Activated CD4-positive, alpha-beta memory T cell treated with anti-CD3 and anti-CD28 coated beads for 36 hours (primary cell): ENCODE measurements at regions of chr3 and their contacts with region 1.

Region 1: DNA sequence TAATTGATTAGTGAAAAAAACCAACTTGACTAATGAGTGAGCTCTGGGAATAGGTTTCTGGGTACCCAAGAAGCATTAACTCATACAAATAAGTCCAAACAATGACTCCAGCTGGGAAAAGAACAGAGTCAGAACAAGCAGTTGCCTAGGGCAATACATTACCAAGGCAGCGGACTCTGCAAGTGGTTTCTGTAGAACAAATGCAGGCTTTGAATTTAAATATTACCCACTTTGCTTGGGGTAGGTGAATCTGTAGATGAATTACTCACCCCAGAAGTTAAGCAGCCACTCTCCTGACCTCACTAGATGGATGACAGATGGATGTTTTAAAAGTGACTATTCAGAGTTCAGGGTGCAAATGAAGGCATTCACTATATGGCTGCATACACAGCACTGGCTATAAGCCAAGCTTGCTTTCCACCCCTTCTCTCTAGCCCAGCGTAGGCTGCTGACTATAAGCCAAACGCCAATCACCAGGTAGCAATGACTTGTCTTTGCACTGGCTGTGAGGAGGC is 73.1 kb upstream of the BHLHE40 start:
- DNase-seq: peak; percentile 72
- H3K4me3 Mint-ChIP-seq: no peak overlapping the region
- H3K27ac Mint-ChIP-seq: peak overlapping the region; percentile 72
- H3K4me1 Mint-ChIP-seq: peaks cover 70% of the 10 kb centered on the region
- H3K27me3 Mint-ChIP-seq: no peaks in the 10 kb centered on the region

Region 2: GRCh38 chr3:4722103-4722502 is 184.1 kb before region 1 on chr3:
- CTCF ChIA-PET with region 1: interaction called, 4 read pairs
- POLR2A ChIA-PET with region 1: no interaction called
- intact Hi-C with region 1: loop called (anchors 5 kb)
- DNase-seq: peak; percentile 41
- H3K4me3 Mint-ChIP-seq: no peak overlapping the region
- H3K27ac Mint-ChIP-seq: no peak overlapping the region
- H3K4me1 Mint-ChIP-seq: peaks cover 19% of the 10 kb centered on the region
- H3K27me3 Mint-ChIP-seq: no peaks in the 10 kb centered on the region

Region 3: DNA sequence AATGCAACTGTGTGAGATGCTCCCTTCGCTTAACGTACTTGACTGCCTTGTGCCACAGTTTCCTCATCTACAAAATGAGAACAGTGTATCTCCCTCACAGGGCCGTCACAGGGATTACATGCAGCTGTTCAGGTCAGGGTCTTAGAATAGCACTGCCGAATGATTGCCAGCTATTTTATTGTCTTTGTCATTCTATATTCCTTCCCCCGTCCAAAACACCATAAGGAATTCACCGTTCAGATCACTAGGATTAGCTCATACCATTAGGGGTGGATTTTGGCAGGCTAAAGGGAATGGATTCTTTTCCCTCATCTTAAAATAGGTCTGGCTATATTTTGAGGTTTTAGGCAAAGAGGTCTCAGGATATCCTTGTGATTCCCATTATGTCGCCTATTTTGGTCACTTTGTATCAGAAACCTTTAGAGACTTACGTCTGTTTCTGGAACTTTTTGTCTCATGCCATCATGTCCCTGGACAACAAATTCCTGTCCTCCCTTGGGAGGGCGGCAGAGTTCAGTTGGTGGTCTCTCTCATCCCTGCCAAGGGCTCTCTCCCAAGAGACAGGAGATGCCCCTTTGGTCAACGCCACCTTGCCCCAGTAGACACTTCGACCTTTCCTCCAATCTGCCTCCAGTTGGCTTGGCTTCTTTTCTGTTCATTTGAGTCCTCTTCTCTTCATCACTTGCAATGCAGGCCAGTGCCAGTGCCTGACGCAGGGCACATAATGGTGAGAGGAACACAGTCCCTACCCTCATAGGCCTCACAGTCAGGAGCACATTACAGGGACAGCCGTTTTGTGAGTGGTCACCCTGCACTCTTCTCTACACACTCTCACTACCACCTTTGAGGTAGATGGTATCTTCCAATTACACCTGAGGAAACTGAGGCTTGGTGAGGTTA is 98.5 kb before region 1 on chr3:
- CTCF ChIA-PET with region 1: no interaction called
- POLR2A ChIA-PET with region 1: no interaction called
- intact Hi-C with region 1: loop called (anchors 1 kb)
- DNase-seq: no peak
- H3K4me3 Mint-ChIP-seq: peak overlapping the region; percentile 45
- H3K27ac Mint-ChIP-seq: peak overlapping the region; percentile 4
- H3K4me1 Mint-ChIP-seq: peaks cover 42% of the 10 kb centered on the region
- H3K27me3 Mint-ChIP-seq: no peaks in the 10 kb centered on the region

Region 4: GRCh38 chr3:4845882-4846281 is 60.3 kb before region 1 on chr3:
- CTCF ChIA-PET with region 1: interaction called, 3 read pairs
- POLR2A ChIA-PET with region 1: interaction called, 9 read pairs
- intact Hi-C with region 1: loop called (anchors 1 kb)
- DNase-seq: no peak
- H3K4me3 Mint-ChIP-seq: peak overlapping the region; percentile 14
- H3K27ac Mint-ChIP-seq: peak overlapping the region; percentile 83
- H3K4me1 Mint-ChIP-seq: peaks cover 96% of the 10 kb centered on the region
- H3K27me3 Mint-ChIP-seq: no peaks in the 10 kb centered on the region

Region 5: GRCh38 chr3:4926892-4927291 is 20.7 kb after region 1 on chr3:
- CTCF ChIA-PET with region 1: no interaction called
- POLR2A ChIA-PET with region 1: no interaction called
- intact Hi-C with region 1: loop called (anchors 1 kb)
- DNase-seq: no peak
- H3K4me3 Mint-ChIP-seq: no peak overlapping the region
- H3K27ac Mint-ChIP-seq: no peak overlapping the region
- H3K4me1 Mint-ChIP-seq: peaks cover 15% of the 10 kb centered on the region
- H3K27me3 Mint-ChIP-seq: no peaks in the 10 kb centered on the region

Region 6: DNA sequence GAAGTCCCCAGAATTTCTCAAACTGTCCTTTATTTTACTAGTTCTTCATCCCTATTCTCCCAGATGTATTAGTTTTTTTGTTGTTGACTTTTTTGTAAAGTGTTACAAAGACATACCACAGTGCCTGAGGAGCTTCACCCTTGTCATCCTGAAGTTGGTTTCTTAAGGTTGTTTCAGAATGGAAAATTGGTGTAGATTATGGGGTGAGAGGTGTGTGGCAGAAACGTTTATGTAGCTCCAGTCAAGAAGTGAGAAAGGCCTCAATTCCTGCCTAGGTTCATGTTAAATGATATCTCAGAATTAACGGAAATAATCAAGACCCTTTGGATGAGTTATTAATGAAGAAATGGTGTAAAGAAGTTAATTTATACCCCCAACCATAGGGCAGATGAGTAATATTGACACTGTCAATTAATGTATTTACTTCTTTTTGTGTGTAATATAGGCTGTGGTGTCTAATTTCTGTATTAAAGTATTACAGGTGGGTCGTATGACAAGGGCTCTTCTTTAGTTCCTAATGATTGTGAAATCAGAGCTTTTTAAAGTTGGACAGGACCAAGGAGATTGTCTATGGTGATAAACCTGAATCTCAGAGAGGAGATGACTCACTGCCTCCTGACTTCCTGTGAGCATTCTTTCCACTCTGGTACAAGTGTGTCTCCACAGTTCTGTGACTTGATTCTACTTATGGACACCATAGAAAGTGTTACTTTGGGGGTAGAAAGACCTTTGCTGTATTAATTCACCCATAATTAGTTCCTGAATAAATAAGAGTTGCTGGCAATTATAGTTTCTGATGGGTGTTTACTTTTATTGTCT is 288.4 kb after region 1 on chr3:
- CTCF ChIA-PET with region 1: no interaction called
- POLR2A ChIA-PET with region 1: interaction called, 3 read pairs
- intact Hi-C with region 1: loop called (anchors 5 kb)
- DNase-seq: peak; percentile 62
- H3K4me3 Mint-ChIP-seq: peak overlapping the region; percentile 66
- H3K27ac Mint-ChIP-seq: peak overlapping the region; percentile 98
- H3K4me1 Mint-ChIP-seq: peaks cover 85% of the 10 kb centered on the region
- H3K27me3 Mint-ChIP-seq: no peaks in the 10 kb centered on the region

Region 7: GRCh38 chr3:5510300-5510699 is 604.1 kb after region 1 on chr3:
- CTCF ChIA-PET with region 1: no interaction called
- POLR2A ChIA-PET with region 1: no interaction called
- intact Hi-C with region 1: no loop called
- DNase-seq: no peak
- H3K4me3 Mint-ChIP-seq: no peak overlapping the region
- H3K27ac Mint-ChIP-seq: no peak overlapping the region
- H3K4me1 Mint-ChIP-seq: no peaks in the 10 kb centered on the region
- H3K27me3 Mint-ChIP-seq: no peaks in the 10 kb centered on the region